ENCODE measurements at regions of chr22 and their contacts with region 1.

Region 1: GRCh38 chr22:39013942-39014722 is at the start of gene APOBEC3C:
- DNase-seq: peak; percentile 74
- H3K4me3 ChIP-seq: peak within 1 kb of the TSS; percentile 75
- H3K27ac ChIP-seq: peak within 1 kb of the TSS; percentile 75
- H3K27me3 ChIP-seq: no peaks in the 10 kb centered on the region
- CTCF ChIP-seq: peak; percentile 18; the same call in 1 of the 2 replicates
- polyA plus RNA-seq, gene APOBEC3C: 35.5 and 41.3 TPM in 2 replicates

Region 2: DNA sequence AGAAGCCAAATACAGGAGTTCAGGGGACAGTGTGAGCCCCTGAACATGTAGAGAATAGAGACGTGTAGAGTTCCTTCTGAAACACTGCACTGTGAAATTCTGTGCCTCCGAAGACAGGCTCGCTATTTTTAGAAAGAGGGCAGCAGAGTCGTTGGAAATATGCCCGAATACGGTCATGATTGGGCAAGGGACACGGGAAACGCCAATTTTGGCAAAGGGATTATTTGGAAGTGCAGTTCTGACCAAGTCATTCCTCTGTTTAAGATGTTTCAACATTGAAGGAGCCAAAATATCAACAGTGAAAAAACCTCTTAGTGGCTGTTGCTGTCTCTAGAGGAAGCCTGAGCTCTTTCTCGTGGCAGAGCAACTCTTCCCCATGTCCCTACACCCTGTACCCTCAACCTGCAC is 132.7 kb before region 1 on chr22:
- CTCF ChIA-PET with region 1: interaction called, 10 read pairs
- POLR2A ChIA-PET with region 1: no interaction called
- DNase-seq: peak; percentile 56
- H3K4me3 ChIP-seq: peak overlapping the region; percentile 13; the same call in 1 of the 2 replicates
- H3K27ac ChIP-seq: peak overlapping the region; percentile 78
- H3K27me3 ChIP-seq: peaks cover 5% of the 10 kb centered on the region
- CTCF ChIP-seq: no peak

Region 3: GRCh38 chr22:39028281-39028680 is 14.1 kb after region 1 on chr22:
- CTCF ChIA-PET with region 1: no interaction called
- POLR2A ChIA-PET with region 1: no interaction called
- DNase-seq: no peak
- H3K4me3 ChIP-seq: no peak overlapping the region
- H3K27ac ChIP-seq: no peak overlapping the region
- H3K27me3 ChIP-seq: no peaks in the 10 kb centered on the region
- CTCF ChIP-seq: no peak